Activated CD8-positive, alpha-beta memory T cell treated with anti-CD3 and anti-CD28 coated beads, Interleukin-2, amount 10 ng/mL, durations not matched to agents 7 days and 5 days (primary cell): ENCODE measurements at regions of chr17 and their contacts with region 1.

Region 1: DNA sequence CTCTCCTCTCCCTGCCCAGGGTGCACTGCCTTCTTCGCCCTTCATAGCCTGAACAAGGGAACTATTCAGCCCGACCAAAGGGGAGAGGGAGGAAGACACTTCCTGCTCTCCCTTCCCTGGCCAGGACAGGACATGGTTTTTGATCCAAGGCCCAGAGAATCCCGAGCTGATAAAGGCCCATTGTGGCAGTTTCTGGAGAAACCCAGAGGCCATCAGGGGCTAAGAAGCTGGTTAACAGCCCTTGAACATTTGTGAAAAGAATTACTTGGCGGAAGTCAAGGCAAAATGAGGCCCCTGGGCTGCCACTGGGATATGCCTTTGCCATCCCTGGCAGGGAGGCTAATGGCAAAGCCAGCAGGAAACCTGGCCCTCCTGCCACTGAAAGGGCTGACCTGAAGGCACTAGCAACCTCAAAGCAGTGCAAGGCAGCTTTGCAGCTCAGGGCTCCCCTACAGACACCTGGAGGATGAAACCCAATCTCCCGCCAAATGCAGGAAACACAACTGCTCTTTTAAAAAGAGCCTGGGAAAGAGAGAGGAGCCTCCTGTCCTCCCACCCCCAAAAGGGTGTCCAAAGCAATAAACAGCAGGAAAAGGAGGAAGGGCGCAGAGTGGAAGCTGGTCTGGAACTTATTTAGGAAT is 12.6 kb downstream of the PHB1 start:
- DNase-seq: no peak
- ATAC-seq: no peak
- H3K4me3 Mint-ChIP-seq: no peak overlapping the region
- H3K27ac Mint-ChIP-seq: no peak overlapping the region
- H3K4me1 Mint-ChIP-seq: peaks cover 41% of the 10 kb centered on the region
- H3K27me3 Mint-ChIP-seq: peaks cover 3% of the 10 kb centered on the region

Region 2: GRCh38 chr17:49132699-49133364 is 269.3 kb before region 1 on chr17 and contains the start of gene B4GALNT2:
- CTCF ChIA-PET with region 1: no interaction called
- DNase-seq: no peak
- ATAC-seq: peak; percentile 33
- H3K4me3 Mint-ChIP-seq: peak within 1 kb of the TSS; percentile 2
- H3K27ac Mint-ChIP-seq: no peak within 1 kb of the TSS
- H3K4me1 Mint-ChIP-seq: peaks cover 3% of the 10 kb centered on the region
- H3K27me3 Mint-ChIP-seq: peaks cover 72% of the 10 kb centered on the region
- total RNA-seq, gene B4GALNT2: 0.02 to 0.03 TPM

Region 3: GRCh38 chr17:49390548-49391324 is 11.4 kb before region 1 on chr17:
- CTCF ChIA-PET with region 1: interaction called, 20 read pairs
- DNase-seq: peak; percentile 50
- ATAC-seq: peak; percentile 40
- H3K4me3 Mint-ChIP-seq: peak overlapping the region; percentile 45
- H3K27ac Mint-ChIP-seq: peak overlapping the region; percentile 95
- H3K4me1 Mint-ChIP-seq: peaks cover 68% of the 10 kb centered on the region
- H3K27me3 Mint-ChIP-seq: no peaks in the 10 kb centered on the region

Region 4: GRCh38 chr17:49504369-49504768 is 102.3 kb after region 1 on chr17:
- CTCF ChIA-PET with region 1: no interaction called
- DNase-seq: no peak
- ATAC-seq: no peak
- H3K4me3 Mint-ChIP-seq: no peak overlapping the region
- H3K27ac Mint-ChIP-seq: no peak overlapping the region
- H3K4me1 Mint-ChIP-seq: no peaks in the 10 kb centered on the region
- H3K27me3 Mint-ChIP-seq: peaks cover 57% of the 10 kb centered on the region